Common myeloid progenitor, CD34-positive (primary cell): ENCODE measurements at regions of chr21 and their contacts with region 1.

Region 1: DNA sequence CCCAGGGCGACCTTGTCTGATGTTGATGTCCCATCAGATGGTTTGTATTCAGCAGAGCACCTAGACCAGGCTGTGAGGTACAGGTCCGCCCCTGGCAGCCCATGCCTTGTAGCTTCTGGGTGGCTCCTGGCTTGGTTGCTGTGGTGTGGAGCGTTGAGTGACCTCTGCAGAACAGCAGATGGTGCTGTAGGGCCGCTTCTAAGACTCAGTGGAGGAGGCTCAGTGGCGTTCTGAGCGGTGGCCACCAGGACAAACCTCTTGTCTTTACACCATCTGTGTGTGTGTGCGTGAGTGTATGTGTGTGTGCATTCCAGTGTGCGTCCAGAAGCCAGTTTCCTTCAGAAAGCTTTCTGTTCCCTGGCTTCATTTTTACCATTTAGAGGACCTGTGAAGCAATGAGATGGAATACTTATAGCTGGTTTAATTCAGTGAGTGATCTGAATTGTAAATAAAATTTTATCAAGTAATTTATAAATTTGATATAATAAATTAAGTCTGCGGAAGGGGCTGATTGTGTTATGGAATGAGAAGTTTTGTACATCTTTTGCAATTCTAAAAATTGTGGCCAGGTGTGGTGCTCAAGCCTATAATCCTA is 66.1 kb downstream of the ADARB1 start:
- DNase-seq: peak; percentile 94 to 98 (median 98)
- H3K4me3 ChIP-seq: no peak overlapping the region
- H3K27ac ChIP-seq: no peak overlapping the region
- H3K4me1 ChIP-seq: peaks cover 0 to 3% (median 2%) of the 10 kb centered on the region in 4 experiments
- H3K27me3 ChIP-seq: no peaks in the 10 kb centered on the region

Region 2: GRCh38 chr21:44962403-44962966 is 178.0 kb before region 1 on chr21:
- CTCF ChIA-PET with region 1: interaction called, 15 read pairs
- POLR2A ChIA-PET with region 1: no interaction called
- DNase-seq: no peak
- H3K4me3 ChIP-seq: no peak overlapping the region
- H3K27ac ChIP-seq: no peak overlapping the region
- H3K4me1 ChIP-seq: peaks cover 0 to 27% (median 25%) of the 10 kb centered on the region in 4 experiments
- H3K27me3 ChIP-seq: no peaks in the 10 kb centered on the region

Region 3: DNA sequence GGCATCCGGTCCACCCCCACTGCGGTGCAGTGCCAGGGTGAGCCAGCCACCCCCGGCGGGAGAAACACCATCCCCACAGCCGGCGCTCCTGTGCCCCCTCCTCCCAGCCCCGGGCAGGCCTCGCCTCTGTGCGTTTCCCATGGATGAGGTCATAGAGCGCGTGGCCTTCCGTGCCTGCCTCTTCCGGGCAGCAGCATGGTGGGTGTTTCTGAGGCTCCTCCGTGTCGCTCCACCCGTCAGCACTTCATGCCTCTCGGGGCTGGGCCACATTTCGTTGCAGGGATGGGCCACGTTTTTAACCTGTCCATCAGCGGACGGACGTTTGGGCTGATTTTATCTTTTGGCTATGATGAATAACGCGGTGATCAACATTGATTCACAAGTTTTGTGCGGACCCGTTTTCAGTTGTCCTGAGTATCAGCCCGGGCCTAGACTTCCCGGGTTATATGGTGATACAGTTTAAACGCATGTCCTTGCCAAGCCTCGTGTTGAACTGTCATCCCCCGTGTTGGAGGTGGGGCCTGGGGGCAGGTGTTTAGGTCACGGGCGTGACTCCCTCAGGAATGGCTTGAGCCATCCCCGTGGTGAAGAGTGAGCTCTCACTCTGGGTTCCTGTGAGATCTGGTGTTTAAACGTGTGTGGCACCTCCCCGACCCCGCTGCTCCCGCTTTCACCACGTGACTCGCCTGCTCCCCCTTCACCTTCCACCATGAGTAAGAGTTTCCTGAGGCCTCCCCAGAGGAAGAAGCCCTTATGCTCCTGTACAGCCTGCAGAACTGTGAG is 135.8 kb before region 1 on chr21:
- CTCF ChIA-PET with region 1: no interaction called
- POLR2A ChIA-PET with region 1: no interaction called
- DNase-seq: no peak
- H3K4me3 ChIP-seq: no peak overlapping the region
- H3K27ac ChIP-seq: no peak overlapping the region
- H3K4me1 ChIP-seq: no peaks in the 10 kb centered on the region
- H3K27me3 ChIP-seq: peaks cover 0 to 12% (median 8%) of the 10 kb centered on the region in 5 experiments

Region 4: GRCh38 chr21:45034556-45035386 is 105.7 kb before region 1 on chr21:
- CTCF ChIA-PET with region 1: no interaction called
- POLR2A ChIA-PET with region 1: no interaction called
- DNase-seq: no peak
- H3K4me3 ChIP-seq: no peak overlapping the region
- H3K27ac ChIP-seq: no peak overlapping the region
- H3K4me1 ChIP-seq: peaks cover 0 to 17% (median 10%) of the 10 kb centered on the region in 4 experiments
- H3K27me3 ChIP-seq: peaks cover 0 to 7% (median 0%) of the 10 kb centered on the region in 5 experiments

Region 5: GRCh38 chr21:45098867-45099266 is 41.6 kb before region 1 on chr21:
- CTCF ChIA-PET with region 1: interaction called, 34 read pairs
- POLR2A ChIA-PET with region 1: no interaction called
- DNase-seq: peak in 1 of 3 donors; percentile 45
- H3K4me3 ChIP-seq: no peak overlapping the region
- H3K27ac ChIP-seq: no peak overlapping the region
- H3K4me1 ChIP-seq: peaks cover 0 to 6% (median under 1%) of the 10 kb centered on the region in 4 experiments
- H3K27me3 ChIP-seq: peaks cover 0 to 13% (median 2%) of the 10 kb centered on the region in 5 experiments

Region 6: GRCh38 chr21:45130324-45130774 is 10.1 kb before region 1 on chr21:
- CTCF ChIA-PET with region 1: interaction called, 71 read pairs
- POLR2A ChIA-PET with region 1: no interaction called
- DNase-seq: peak in 2 of 3 donors; percentile 31 to 54
- H3K4me3 ChIP-seq: peak overlapping the region in 2 of 7 experiments; percentile 25 to 35
- H3K27ac ChIP-seq: no peak overlapping the region
- H3K4me1 ChIP-seq: peaks cover 4 to 28% (median 20%) of the 10 kb centered on the region in 4 experiments
- H3K27me3 ChIP-seq: peaks cover 0 to 1% (median 0%) of the 10 kb centered on the region in 5 experiments

Region 7: DNA sequence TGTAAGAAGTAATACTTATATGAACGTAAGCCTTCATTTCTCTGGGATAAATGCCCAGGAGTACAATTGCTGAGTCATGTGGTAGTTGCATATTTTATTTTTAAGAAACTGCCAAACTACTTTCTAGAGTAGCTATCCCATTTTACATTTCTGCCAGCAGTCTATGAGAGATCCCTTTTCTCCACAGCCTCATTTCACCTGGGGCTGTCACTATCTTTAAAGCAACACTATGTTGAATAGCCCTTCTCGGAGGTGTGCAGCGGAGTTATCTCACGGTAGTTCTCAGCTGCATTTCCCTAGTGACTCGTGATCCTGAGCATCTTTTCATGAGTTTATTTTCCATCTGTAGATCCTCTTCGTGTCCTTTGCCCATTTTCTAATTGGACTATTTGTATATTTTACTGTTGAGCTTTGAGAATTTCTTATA is 27.4 kb after region 1 on chr21:
- CTCF ChIA-PET with region 1: interaction called, 18 read pairs
- POLR2A ChIA-PET with region 1: no interaction called
- DNase-seq: peak in 2 of 3 donors; percentile 60 to 64
- H3K4me3 ChIP-seq: peak overlapping the region in 2 of 7 experiments; percentile 38 to 60
- H3K27ac ChIP-seq: peak overlapping the region in 1 of 2 experiments; percentile 65
- H3K4me1 ChIP-seq: peaks cover 3 to 42% (median 26%) of the 10 kb centered on the region in 4 experiments
- H3K27me3 ChIP-seq: no peaks in the 10 kb centered on the region

Region 8: DNA sequence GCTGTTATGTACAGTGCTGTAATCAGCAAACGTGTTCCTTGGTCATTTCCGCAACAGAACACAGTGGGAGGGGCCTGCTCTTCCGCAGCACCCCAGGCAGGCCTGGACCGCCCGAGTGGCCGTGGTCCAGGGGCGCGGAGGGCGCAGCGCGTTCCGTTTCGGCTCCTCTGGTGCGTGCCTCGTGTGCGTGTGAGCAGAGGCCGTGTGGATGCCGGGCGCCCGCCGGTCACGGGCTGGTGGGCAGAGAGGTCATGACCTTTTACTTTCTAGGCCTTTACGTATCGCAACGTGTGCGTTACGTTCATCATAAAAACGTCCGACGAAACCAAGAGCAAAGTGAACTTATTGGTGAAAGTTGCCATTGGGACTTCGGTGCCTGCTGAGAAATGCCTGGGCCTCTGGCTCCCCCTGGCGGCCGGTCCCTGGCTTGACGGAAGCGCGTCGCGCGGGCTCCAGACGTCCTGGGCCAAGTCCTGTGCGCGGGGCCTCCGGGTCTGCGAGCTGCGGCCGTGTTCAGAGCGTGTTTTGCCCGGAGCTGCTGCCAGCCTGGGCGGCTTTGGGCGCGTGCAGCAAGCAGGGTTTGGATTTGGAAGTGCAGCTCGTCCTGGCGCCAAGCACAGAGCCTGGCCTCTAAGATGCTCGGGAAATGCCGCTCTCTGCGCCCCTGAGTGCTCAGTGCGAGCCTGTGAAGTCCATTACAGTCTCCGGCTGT is 298.9 kb after region 1 on chr21:
- CTCF ChIA-PET with region 1: interaction called, 60 read pairs
- POLR2A ChIA-PET with region 1: interaction called, 5 read pairs
- DNase-seq: peak; percentile 81 to 91 (median 88)
- H3K4me3 ChIP-seq: peak overlapping the region in 4 of 7 experiments; percentile 29 to 64 (median 60)
- H3K27ac ChIP-seq: peak overlapping the region in 1 of 2 experiments; percentile 43
- H3K4me1 ChIP-seq: peaks cover 0 to 21% (median 12%) of the 10 kb centered on the region in 4 experiments
- H3K27me3 ChIP-seq: peaks cover 0 to 4% (median 0%) of the 10 kb centered on the region in 5 experiments